Activated CD4-positive, alpha-beta T cell treated with anti-CD3 and anti-CD28 coated beads for 36 hours (primary cell): ENCODE measurements at regions of chr2 and their contacts with region 1.

Region 1: DNA sequence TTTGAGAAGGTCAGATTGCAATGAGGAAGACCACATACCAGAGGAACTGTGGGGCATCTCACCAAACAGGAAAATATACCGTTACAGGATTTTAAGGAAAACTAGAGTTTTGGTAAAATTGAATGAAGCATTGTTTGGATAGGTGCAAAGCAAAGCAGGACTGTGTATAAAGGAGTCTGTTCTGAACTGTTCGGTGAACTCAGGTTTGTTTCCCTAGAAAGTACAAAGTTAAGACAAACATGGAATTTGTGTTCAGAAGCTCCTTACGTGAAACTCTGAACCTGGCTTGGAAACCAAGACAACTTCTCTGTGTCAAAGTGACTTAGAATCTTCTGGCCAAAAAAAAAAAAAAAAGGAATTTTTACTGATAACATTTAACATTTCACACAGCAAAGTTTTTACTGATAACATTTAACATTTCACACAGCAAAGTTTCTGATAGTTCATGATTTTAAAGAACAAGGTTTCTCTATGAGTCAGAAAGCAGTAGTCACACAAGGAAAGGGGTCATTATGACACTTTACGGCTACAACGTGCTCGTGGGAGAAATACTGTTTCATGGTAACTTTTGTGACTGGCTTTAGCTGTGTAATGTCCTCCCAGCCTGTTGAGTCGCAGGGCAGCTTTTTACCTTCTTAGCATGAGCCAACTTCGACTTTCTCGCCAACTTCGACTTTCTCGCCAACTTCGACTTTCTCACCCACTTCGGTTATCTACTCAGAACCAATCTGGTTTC is 21.2 kb upstream of the TET3 start:
- DNase-seq: peak; percentile 72
- ATAC-seq: peak; percentile 95
- H3K4me3 Mint-ChIP-seq: peak overlapping the region; percentile 37
- H3K27ac Mint-ChIP-seq: peak overlapping the region; percentile 90
- H3K4me1 Mint-ChIP-seq: peaks cover 41% of the 10 kb centered on the region
- H3K27me3 Mint-ChIP-seq: no peaks in the 10 kb centered on the region

Region 2: DNA sequence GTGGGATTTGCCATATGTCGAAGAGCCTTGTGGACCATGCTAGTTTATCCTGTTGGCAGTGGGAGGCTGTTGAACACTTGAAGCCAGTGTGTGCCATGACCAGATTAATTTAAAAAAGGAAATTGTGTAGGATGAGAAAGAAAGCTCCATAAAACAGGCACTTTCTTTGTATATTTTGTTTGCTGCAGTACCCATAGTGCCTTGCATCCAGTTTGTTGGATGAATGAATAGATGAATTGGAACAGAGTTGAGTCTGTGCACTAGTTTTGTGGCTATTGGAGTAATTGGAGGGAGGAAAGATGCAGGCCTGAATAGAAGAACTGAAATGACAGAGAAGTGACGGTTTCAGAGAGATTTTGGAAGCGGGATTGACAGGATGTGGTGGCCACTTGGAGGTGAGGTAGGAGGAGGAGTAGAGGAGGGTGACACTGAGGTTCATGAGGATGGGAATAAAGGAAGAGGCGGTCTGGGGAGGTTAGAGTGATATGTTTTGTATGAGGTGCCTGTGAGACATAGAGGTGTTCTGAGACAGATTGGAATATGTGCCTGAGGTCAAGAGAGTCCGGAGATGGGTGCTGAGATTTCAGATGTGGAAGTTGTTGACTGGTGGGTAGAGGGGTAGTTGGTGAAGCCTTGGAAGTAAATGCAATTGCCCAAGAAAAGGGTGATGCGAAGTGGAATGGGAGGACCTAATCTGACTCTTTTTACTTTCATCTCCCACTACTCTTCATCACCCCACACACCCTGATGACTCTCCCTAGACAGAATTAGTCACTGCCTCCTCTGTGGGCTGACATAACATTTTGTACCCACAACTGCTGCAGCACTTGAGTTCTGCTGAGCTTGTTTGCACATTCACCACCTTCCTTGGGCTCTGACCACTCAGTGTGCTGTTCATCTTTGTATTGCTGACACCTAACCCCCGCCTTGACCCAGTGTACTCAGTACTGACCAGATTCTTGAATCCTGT is 31.7 kb before region 1 on chr2:
- CTCF ChIA-PET with region 1: interaction called, 3 read pairs
- POLR2A ChIA-PET with region 1: interaction called, 6 read pairs
- intact Hi-C with region 1: loop called in 1 of 2 experiments (anchors 1 kb)
- DNase-seq: peak; percentile 76
- ATAC-seq: peak; percentile 93
- H3K4me3 Mint-ChIP-seq: peak overlapping the region; percentile 24
- H3K27ac Mint-ChIP-seq: peak overlapping the region; percentile 68
- H3K4me1 Mint-ChIP-seq: peaks cover 76% of the 10 kb centered on the region
- H3K27me3 Mint-ChIP-seq: no peaks in the 10 kb centered on the region

Region 3: GRCh38 chr2:73939419-73939818 is 24.1 kb before region 1 on chr2:
- CTCF ChIA-PET with region 1: interaction called, 4 read pairs
- POLR2A ChIA-PET with region 1: interaction called, 5 read pairs
- intact Hi-C with region 1: loop called in 1 of 2 experiments (anchors 1 kb)
- DNase-seq: peak; percentile 59
- ATAC-seq: peak; percentile 78
- H3K4me3 Mint-ChIP-seq: no peak overlapping the region
- H3K27ac Mint-ChIP-seq: peak overlapping the region; percentile 71
- H3K4me1 Mint-ChIP-seq: peaks cover 82% of the 10 kb centered on the region
- H3K27me3 Mint-ChIP-seq: no peaks in the 10 kb centered on the region

Region 4: DNA sequence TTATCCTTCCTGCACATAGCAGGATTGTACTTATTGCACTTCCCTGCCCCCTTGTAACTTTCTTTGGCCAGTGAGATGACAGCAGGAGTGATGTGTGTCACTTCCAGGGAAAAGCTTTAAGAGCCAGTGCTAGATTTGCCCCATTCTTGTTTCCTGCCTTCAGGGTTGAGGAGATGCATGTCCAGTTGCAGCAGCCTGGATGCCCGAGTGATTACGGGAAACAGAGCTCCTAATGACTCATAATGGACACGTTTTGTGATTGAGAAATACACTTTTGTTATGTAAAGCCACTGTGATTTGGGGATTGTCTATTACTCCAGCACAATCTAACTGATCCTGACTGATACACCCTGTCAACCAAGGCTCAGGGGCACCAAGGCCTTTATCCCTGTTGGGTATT is 16.1 kb after region 1 on chr2:
- CTCF ChIA-PET with region 1: interaction called, 5 read pairs
- POLR2A ChIA-PET with region 1: interaction called, 4 read pairs
- intact Hi-C with region 1: loop called (anchors 1 to 2 kb)
- DNase-seq: no peak
- ATAC-seq: peak; percentile 8
- H3K4me3 Mint-ChIP-seq: peak overlapping the region; percentile 68
- H3K27ac Mint-ChIP-seq: peak overlapping the region; percentile 91
- H3K4me1 Mint-ChIP-seq: peaks cover 80% of the 10 kb centered on the region
- H3K27me3 Mint-ChIP-seq: no peaks in the 10 kb centered on the region

Region 5: DNA sequence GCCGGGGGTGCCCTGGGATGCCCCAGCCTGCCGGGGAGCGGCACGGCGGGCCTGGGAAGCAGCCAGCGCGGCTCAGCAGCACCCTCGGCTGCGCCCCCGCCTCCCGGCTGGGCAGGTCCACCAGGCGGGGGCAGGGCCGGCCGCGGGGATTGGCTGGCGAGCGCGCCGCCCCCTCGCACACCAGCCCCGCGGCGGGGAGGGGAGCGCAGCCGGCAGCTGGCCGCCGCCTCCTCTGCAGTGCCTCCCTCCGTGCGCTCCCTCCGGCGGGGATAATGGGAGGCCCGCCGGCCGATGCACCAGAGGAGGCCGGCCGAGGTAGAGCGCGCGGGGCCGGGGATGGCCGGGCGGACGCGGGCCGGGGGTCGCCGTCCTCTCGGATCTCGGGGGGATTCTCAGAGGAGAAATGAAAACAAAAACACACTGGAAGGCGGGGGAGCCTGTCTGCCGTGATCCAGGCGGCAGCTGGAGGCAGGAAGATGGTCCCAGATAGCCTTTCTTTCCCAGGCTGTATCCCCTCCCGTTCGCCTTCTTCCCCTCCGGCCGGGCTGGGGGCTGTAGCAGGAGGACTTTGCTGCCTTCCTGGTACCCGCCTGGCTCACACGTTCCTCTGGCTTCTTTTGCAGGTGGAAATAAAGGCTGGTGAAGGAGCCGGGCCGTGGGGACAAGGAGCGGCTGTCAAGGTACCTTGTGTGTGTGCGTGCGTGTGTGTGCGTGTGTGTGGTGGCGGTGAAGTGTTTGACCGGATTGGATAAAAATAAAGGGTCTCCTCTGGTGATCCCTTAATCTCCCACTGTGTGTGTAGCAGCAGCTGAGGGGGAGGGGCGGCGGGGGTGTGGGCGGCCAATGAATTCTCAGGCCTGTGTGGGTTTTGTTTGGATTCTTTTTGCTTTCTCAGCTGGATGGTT is 39.2 kb after region 1 on chr2:
- CTCF ChIA-PET with region 1: interaction called, 3 read pairs
- POLR2A ChIA-PET with region 1: no interaction called
- intact Hi-C with region 1: loop called in 1 of 2 experiments (anchors 1 kb)
- DNase-seq: peak; percentile 89
- ATAC-seq: peak; percentile 81
- H3K4me3 Mint-ChIP-seq: peak overlapping the region; percentile 77
- H3K27ac Mint-ChIP-seq: peak overlapping the region; percentile 71
- H3K4me1 Mint-ChIP-seq: peaks cover 81% of the 10 kb centered on the region
- H3K27me3 Mint-ChIP-seq: no peaks in the 10 kb centered on the region